ENCODE measurements at regions of chr2 and their contacts with region 1.

Region 1: GRCh38 chr2:227643990-227644551 is 22.5 kb upstream of the SCYGR5 start:
- DNase-seq: peak; percentile 76 to 78
- H3K4me3 ChIP-seq: no peak overlapping the region
- H3K4me3 Mint-ChIP-seq: no peak overlapping the region
- H3K27ac Mint-ChIP-seq: peak overlapping the region; percentile 73
- H3K4me1 ChIP-seq: peaks cover 39% of the 10 kb centered on the region
- H3K4me1 Mint-ChIP-seq: peaks cover 17% of the 10 kb centered on the region
- H3K27me3 ChIP-seq: no peaks in the 10 kb centered on the region
- H3K27me3 Mint-ChIP-seq: no peaks in the 10 kb centered on the region
- CTCF ChIP-seq: no peak

Region 2: DNA sequence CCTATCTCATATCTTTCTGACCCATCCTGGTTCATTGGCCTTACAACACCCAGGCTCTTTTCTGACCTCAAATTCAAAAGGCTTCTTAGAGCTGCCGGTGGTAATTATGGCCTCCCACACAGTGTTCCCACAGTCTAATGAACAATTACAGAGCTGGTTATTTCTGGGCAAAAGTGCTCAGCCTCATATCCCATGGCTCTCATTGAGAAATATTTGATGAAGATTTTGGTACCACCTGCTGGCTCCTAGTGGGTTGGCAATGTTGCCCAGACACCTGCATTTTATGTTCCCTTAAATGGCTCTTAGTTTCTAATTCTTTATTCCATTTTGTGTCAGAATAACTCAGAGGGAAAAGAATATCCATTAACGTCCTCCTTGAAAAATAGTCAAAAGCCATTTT is 65.4 kb before region 1 on chr2:
- CTCF ChIA-PET with region 1: no interaction called
- POLR2A ChIA-PET with region 1: no interaction called
- intact Hi-C with region 1: loop called (anchors 2 kb)
- DNase-seq: no peak
- H3K4me3 ChIP-seq: no peak overlapping the region
- H3K4me3 Mint-ChIP-seq: no peak overlapping the region
- H3K27ac Mint-ChIP-seq: no peak overlapping the region
- H3K4me1 ChIP-seq: peaks cover 12% of the 10 kb centered on the region; the same call in 1 of the 2 replicates
- H3K4me1 Mint-ChIP-seq: peaks cover 20% of the 10 kb centered on the region
- H3K27me3 ChIP-seq: no peaks in the 10 kb centered on the region
- H3K27me3 Mint-ChIP-seq: no peaks in the 10 kb centered on the region
- CTCF ChIP-seq: no peak

Region 3: GRCh38 chr2:227623234-227623633 is 20.8 kb before region 1 on chr2:
- CTCF ChIA-PET with region 1: no interaction called
- POLR2A ChIA-PET with region 1: interaction called, 6 read pairs
- intact Hi-C with region 1: loop called (anchors 1 kb)
- DNase-seq: no peak
- H3K4me3 ChIP-seq: no peak overlapping the region
- H3K4me3 Mint-ChIP-seq: no peak overlapping the region
- H3K27ac Mint-ChIP-seq: no peak overlapping the region
- H3K4me1 ChIP-seq: no peaks in the 10 kb centered on the region
- H3K4me1 Mint-ChIP-seq: peaks cover 8% of the 10 kb centered on the region
- H3K27me3 ChIP-seq: no peaks in the 10 kb centered on the region
- H3K27me3 Mint-ChIP-seq: no peaks in the 10 kb centered on the region
- CTCF ChIP-seq: no peak

Region 4: GRCh38 chr2:227655454-227655853 is 11.4 kb after region 1 on chr2:
- CTCF ChIA-PET with region 1: interaction called, 12 read pairs
- POLR2A ChIA-PET with region 1: interaction called, 3 read pairs
- intact Hi-C with region 1: loop called (anchors 1 kb)
- DNase-seq: no peak
- H3K4me3 ChIP-seq: no peak overlapping the region
- H3K4me3 Mint-ChIP-seq: no peak overlapping the region
- H3K27ac Mint-ChIP-seq: peak overlapping the region; percentile 37
- H3K4me1 ChIP-seq: peaks cover 11% of the 10 kb centered on the region
- H3K4me1 Mint-ChIP-seq: peaks cover 12% of the 10 kb centered on the region
- H3K27me3 ChIP-seq: no peaks in the 10 kb centered on the region
- H3K27me3 Mint-ChIP-seq: no peaks in the 10 kb centered on the region
- CTCF ChIP-seq: no peak

Measured in Caco-2 (cell line).